HepG2 (cell line): ENCODE measurements at regions of chr2 and their contacts with region 1.

Region 1: DNA sequence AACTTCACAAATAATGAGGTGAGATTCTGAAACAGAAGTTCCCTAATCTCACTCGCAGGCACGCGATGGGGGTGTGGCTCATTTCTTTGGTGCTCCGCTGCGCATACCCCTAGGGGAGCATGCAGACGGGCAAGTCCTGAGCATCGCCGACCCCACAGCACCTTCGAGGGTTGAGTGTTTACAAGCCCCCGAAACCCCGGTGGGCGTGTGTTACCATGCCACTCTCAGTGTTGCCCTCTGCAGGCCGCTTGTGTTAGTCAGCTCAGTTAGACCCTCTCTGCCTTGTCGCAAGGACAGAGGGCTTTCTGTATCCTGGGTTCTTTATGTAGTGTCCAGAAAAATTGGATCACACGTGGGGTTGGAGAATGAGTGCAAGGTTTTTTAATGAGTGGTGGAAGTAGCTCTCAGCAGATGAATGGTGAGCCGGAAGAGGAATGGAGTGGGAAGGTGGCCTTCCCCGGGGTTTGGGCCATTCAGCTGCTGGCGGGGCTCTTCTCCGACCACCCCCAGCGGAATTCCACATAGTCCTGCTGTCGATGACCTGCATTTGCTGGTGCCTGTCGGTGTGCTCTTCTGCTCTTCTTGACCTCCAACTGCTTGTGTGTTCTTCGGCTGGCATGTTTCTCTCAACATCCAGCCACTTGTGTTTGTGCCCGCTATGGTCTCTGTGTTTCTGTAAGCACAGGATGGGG is 191.3 kb downstream of the RPRM start:
- DNase-seq: peak; percentile 48
- ATAC-seq: peak; percentile 99
- H3K4me3 ChIP-seq: peak overlapping the region in 1 of 3 experiments; percentile 57; a peak in 1 of 6 replicates
- H3K27ac ChIP-seq: no peak overlapping the region
- H3K4me1 ChIP-seq: peaks cover 7% of the 10 kb centered on the region
- H3K27me3 ChIP-seq: no peaks in the 10 kb centered on the region
- CTCF ChIP-seq: peak; percentile 78
- EP300 ChIP-seq: no peak
- POLR2A ChIP-seq: no peak
- RAD21 ChIP-seq: peak; percentile 19; the same call in 1 of the 2 replicates

Region 2: DNA sequence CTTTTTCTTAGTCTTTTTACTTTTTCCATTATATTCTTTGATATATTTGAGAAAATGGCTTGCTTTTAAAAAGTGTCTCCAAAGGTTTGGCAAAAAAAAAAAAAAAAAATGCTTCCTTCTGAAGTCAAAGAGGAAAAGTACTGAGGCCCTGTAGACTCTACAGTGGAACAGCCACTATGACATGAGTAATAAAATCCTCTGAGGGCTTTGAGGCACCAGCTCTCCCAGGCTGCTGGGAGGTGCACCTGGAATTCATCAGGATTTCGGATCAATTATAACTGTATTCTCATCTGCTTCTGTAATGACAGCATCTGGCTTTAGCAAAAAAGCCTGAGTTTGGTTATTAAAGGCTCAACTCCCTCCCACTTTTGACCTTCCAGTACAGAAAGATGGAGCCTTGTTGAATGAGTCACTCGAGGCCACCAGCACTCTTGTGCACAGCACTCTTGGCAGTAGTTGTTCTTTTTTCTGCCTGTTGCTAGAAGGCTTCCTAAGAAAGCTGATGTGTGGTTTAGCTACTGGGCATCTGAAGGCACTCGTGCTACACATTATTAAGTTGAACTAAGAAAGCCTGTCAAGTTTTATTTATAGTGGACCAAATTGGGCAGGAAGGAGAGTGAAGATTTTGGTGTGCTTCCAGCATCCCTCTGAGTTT is 701.3 kb before region 1 on chr2:
- CTCF ChIA-PET with region 1: no interaction called
- POLR2A ChIA-PET with region 1: no interaction called
- in situ Hi-C with region 1: no loop called
- intact Hi-C with region 1: no loop called
- DNase-seq: peak; percentile 18
- ATAC-seq: no peak
- H3K4me3 ChIP-seq: no peak overlapping the region
- H3K27ac ChIP-seq: no peak overlapping the region
- H3K4me1 ChIP-seq: no peaks in the 10 kb centered on the region
- H3K27me3 ChIP-seq: no peaks in the 10 kb centered on the region
- CTCF ChIP-seq: no peak
- EP300 ChIP-seq: no peak
- POLR2A ChIP-seq: no peak
- RAD21 ChIP-seq: no peak

Region 3: GRCh38 chr2:153268941-153269461 is 18.3 kb before region 1 on chr2:
- CTCF ChIA-PET with region 1: no interaction called
- POLR2A ChIA-PET with region 1: no interaction called
- in situ Hi-C with region 1: no loop called
- intact Hi-C with region 1: no loop called
- DNase-seq: no peak
- ATAC-seq: no peak
- H3K4me3 ChIP-seq: no peak overlapping the region
- H3K27ac ChIP-seq: no peak overlapping the region
- H3K4me1 ChIP-seq: no peaks in the 10 kb centered on the region
- H3K27me3 ChIP-seq: no peaks in the 10 kb centered on the region
- CTCF ChIP-seq: no peak
- EP300 ChIP-seq: no peak
- POLR2A ChIP-seq: no peak
- RAD21 ChIP-seq: no peak

Region 4: DNA sequence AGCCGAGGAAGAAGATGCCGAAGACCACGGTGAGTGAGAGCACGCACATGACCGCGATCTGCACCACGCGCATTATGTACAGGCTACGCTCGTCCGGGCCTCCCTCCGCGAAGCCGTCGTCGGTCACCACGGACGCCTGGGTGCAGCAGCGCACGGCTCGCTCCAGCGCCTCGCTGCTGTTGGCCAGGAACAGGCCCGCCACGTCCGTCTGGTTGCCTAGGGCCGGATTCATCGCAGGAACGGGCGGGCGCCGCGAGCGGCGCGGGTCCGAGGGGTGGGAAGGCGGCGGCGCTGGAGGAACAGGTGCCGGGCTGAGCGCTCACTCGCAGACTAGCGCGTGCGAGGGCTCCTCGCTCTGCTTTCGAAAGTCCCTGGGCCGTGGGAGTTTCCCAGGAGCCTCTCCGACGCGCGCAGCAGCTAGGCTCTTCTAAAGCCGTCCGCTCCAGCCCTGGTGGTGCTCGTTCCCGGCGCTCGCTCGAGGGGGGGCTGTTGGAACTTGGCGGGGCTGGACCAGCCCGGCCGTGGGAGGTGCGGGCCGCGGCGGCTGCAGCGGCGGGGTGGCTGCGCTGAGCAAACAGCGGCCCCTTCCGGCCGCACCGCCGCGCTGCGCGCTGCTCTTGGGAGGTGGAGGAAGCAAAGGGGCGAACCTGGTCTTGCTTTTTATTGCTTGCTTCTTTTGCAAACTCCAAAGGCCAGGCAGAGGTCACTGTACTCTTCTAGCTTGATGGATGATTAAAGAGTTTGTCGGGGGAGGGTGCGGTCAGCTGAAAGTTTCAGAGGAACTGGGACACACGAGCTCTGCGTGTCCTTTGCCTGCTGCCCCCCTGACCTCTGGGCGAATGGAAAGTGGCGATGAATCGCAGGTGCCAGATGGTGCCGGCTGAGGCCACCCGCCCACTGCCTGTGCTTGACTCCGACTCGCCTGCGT is 191.3 kb after region 1 on chr2 and contains the start of gene RPRM:
- CTCF ChIA-PET with region 1: no interaction called
- POLR2A ChIA-PET with region 1: no interaction called
- in situ Hi-C with region 1: no loop called
- intact Hi-C with region 1: loop called (anchors 5 kb)
- DNase-seq: peak; percentile 35
- ATAC-seq: peak; percentile 98
- H3K4me3 ChIP-seq: peak within 1 kb of the TSS; percentile 19 to 63 (median 39); a peak in 4 of 6 replicates
- H3K27ac ChIP-seq: no peak within 1 kb of the TSS
- H3K4me1 ChIP-seq: peaks cover 16% of the 10 kb centered on the region
- H3K27me3 ChIP-seq: peaks cover 6 to 43% of the 10 kb centered on the region in 2 experiments; a peak in 4 of 5 replicates
- CTCF ChIP-seq: peak; percentile 85
- EP300 ChIP-seq: no peak
- POLR2A ChIP-seq: no peak
- RAD21 ChIP-seq: peak; percentile 94
- total RNA-seq, gene RPRM: not detected in 2 replicates